H1 (cell line): ENCODE measurements at regions of chr16 and their contacts with region 1.

Region 1: GRCh38 chr16:48117217-48118105 is 38.3 kb downstream of the ABCC12 start:
- DNase-seq: peak; percentile 71 to 97
- H3K4me3 ChIP-seq: no peak overlapping the region
- H3K27ac ChIP-seq: no peak overlapping the region
- H3K4me1 ChIP-seq: no peaks in the 10 kb centered on the region
- H3K27me3 ChIP-seq: no peaks in the 10 kb centered on the region
- CTCF ChIP-seq: peak; percentile 99
- EP300 ChIP-seq: 0 out of 3 replicates have a peak, but pooled peaks of 1 of the 2 experiments have one; percentile 17
- POLR2A ChIP-seq: no peak
- RAD21 ChIP-seq: peak; percentile 81 to 89

Region 2: GRCh38 chr16:48102083-48103008 is 15.1 kb before region 1 on chr16:
- CTCF ChIA-PET with region 1: interaction called, 18 read pairs
- POLR2A ChIA-PET with region 1: no interaction called
- DNase-seq: no peak
- H3K4me3 ChIP-seq: no peak overlapping the region
- H3K27ac ChIP-seq: no peak overlapping the region
- H3K4me1 ChIP-seq: peaks cover 0 to 5% (median 1%) of the 10 kb centered on the region in 4 experiments; a peak in 1 of 7 replicates
- H3K27me3 ChIP-seq: no peaks in the 10 kb centered on the region; a peak in 1 of 7 replicates
- CTCF ChIP-seq: no peak
- EP300 ChIP-seq: no peak
- POLR2A ChIP-seq: no peak
- RAD21 ChIP-seq: no peak